ENCODE measurements at regions of chr1 and their contacts with region 1.

Region 1: GRCh38 chr1:214584805-214585766 is 17.9 kb upstream of the CENPF start:
- DNase-seq: peak; percentile 86
- ATAC-seq: peak; percentile 34
- H3K4me3 ChIP-seq: no peak overlapping the region
- H3K27ac ChIP-seq: peak overlapping the region; percentile 2; the same call in 1 of the 2 replicates
- H3K4me1 ChIP-seq: peaks cover 43% of the 10 kb centered on the region
- H3K27me3 ChIP-seq: no peaks in the 10 kb centered on the region
- CTCF ChIP-seq: peak; percentile 97

Region 2: GRCh38 chr1:214328770-214329469 is 256.2 kb before region 1 on chr1:
- CTCF ChIA-PET with region 1: interaction called, 36 read pairs
- POLR2A ChIA-PET with region 1: no interaction called
- intact Hi-C with region 1: loop called (anchors 1 kb)
- DNase-seq: peak; percentile 96
- ATAC-seq: peak; percentile 93
- H3K4me3 ChIP-seq: no peak overlapping the region
- H3K27ac ChIP-seq: no peak overlapping the region
- H3K4me1 ChIP-seq: peaks cover 4% of the 10 kb centered on the region
- H3K27me3 ChIP-seq: no peaks in the 10 kb centered on the region
- CTCF ChIP-seq: peak; percentile 96

Region 3: DNA sequence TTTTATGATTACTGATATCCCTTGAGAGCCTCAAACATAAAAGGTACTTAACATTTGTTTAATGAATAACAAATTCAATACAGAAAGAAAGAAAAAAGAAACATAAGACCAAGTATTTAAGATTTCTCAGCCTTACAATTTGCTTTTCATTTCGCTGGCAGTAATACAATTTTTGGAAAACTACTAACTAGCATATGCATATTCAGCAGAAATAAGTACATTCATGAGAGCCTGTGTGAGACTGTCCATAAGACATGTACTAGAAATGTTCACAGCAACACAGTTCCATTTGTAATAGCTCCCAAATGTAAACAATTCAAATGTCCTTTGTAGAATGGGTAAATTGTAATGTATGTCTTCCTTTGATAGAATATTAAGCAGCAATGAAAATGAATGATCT is 152.8 kb before region 1 on chr1:
- CTCF ChIA-PET with region 1: no interaction called
- POLR2A ChIA-PET with region 1: no interaction called
- intact Hi-C with region 1: no loop called
- DNase-seq: no peak
- ATAC-seq: no peak
- H3K4me3 ChIP-seq: no peak overlapping the region
- H3K27ac ChIP-seq: no peak overlapping the region
- H3K4me1 ChIP-seq: peaks cover 16% of the 10 kb centered on the region
- H3K27me3 ChIP-seq: no peaks in the 10 kb centered on the region
- CTCF ChIP-seq: no peak

Region 4: DNA sequence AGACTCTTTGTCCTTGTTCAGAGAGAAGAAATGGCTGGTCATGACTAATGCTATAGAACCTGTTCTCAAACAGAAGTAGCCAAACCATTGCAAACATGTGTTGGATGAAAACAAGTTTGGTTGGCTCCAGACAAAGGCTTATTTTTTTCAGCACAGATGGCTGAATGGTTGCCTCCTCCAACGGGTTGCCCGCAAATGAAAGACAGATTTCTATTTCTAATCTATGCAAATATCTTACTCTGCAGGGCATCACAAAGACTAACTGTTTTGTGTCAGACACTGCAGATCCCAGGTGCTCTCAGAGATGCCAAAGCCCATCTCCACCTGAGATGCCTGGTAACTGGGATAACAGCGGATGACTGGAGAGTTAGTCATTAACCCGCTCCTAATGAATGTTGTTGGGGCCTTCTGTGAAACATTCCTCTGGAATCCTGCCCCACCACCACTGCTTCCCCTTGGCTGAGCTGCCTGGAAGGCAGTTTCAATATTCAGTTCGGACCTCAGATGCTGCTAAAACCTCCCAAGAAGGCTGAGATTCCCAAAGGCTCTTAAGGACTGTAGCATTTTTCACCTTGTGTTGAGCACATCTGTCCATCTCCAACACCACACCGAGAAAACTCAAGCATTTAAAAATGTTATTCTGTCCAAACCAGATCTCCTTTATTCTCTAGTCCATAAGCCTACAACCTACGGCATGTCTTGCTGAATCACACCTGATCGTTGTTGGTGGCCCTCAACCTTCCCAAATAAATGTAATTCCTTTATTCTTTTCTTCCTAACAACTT is 138.1 kb before region 1 on chr1:
- CTCF ChIA-PET with region 1: no interaction called
- POLR2A ChIA-PET with region 1: no interaction called
- intact Hi-C with region 1: loop called (anchors 5 kb)
- DNase-seq: peak; percentile 99
- ATAC-seq: peak; percentile 86
- H3K4me3 ChIP-seq: peak overlapping the region; percentile 59
- H3K27ac ChIP-seq: peak overlapping the region; percentile 95
- H3K4me1 ChIP-seq: peaks cover 48% of the 10 kb centered on the region
- H3K27me3 ChIP-seq: no peaks in the 10 kb centered on the region
- CTCF ChIP-seq: no peak

Region 5: DNA sequence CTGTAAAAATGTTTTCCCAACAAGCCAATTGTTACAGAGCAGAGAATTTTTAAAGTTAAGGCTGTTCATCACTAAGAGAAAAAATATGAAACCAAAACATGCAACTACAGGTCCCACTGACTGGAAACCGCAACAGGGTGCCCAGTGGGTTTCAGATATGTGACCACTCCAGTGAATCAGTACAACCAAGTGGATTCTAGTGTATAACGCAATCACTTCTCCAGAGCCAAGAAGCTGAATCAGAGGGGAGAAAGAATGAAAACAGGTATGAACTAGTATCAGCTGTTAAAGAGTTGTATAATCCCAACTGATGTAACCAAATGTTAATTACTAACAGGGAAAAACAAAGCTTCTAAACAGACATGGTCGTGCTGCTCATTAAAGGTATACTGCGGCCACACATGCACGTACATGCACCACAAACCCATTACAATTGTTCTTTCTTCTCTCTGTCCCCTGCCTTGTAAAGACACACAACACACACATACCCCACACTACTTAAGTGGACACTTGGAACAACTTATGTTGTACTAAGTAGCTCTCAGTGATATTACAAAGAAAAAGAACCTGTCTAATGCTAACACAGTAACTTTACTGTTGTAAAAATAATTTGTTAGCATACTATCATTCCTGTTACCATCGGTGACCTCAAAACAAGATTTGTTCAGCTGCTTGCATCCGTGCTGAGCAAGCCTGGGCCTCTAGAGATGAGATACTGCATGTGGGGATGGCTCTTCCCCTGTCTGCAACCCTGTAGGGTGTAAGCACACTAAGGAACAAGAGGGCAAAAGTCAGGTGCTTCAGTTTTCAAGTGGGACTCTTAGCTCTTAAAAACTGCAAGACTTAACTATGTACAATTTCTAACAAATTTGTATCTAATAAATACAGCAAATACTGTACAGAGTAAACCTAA is 107.9 kb before region 1 on chr1:
- CTCF ChIA-PET with region 1: interaction called, 5 read pairs
- POLR2A ChIA-PET with region 1: no interaction called
- intact Hi-C with region 1: loop called (anchors 1 kb)
- DNase-seq: no peak
- ATAC-seq: no peak
- H3K4me3 ChIP-seq: no peak overlapping the region; the same call in 1 of the 2 replicates
- H3K27ac ChIP-seq: peak overlapping the region; percentile 56; the same call in 1 of the 2 replicates
- H3K4me1 ChIP-seq: peaks cover 39% of the 10 kb centered on the region
- H3K27me3 ChIP-seq: no peaks in the 10 kb centered on the region
- CTCF ChIP-seq: no peak

Region 6: GRCh38 chr1:214515544-214516429 is 69.3 kb before region 1 on chr1:
- CTCF ChIA-PET with region 1: no interaction called
- POLR2A ChIA-PET with region 1: no interaction called
- intact Hi-C with region 1: loop called (anchors 2 kb)
- DNase-seq: no peak
- ATAC-seq: no peak
- H3K4me3 ChIP-seq: peak overlapping the region; percentile 37
- H3K27ac ChIP-seq: peak overlapping the region; percentile 39
- H3K4me1 ChIP-seq: peaks cover 49% of the 10 kb centered on the region
- H3K27me3 ChIP-seq: no peaks in the 10 kb centered on the region
- CTCF ChIP-seq: no peak

Region 7: GRCh38 chr1:214566158-214567104 is 18.7 kb before region 1 on chr1:
- CTCF ChIA-PET with region 1: no interaction called
- POLR2A ChIA-PET with region 1: no interaction called
- intact Hi-C with region 1: loop called (anchors 2 kb)
- DNase-seq: peak; percentile 96
- ATAC-seq: peak; percentile 64
- H3K4me3 ChIP-seq: peak overlapping the region; percentile 6; the same call in 1 of the 2 replicates
- H3K27ac ChIP-seq: peak overlapping the region; percentile 86
- H3K4me1 ChIP-seq: peaks cover 64% of the 10 kb centered on the region
- H3K27me3 ChIP-seq: no peaks in the 10 kb centered on the region
- CTCF ChIP-seq: no peak